HCT116 (cell line): ENCODE measurements at regions of chr6 and their contacts with region 1.

Region 1: DNA sequence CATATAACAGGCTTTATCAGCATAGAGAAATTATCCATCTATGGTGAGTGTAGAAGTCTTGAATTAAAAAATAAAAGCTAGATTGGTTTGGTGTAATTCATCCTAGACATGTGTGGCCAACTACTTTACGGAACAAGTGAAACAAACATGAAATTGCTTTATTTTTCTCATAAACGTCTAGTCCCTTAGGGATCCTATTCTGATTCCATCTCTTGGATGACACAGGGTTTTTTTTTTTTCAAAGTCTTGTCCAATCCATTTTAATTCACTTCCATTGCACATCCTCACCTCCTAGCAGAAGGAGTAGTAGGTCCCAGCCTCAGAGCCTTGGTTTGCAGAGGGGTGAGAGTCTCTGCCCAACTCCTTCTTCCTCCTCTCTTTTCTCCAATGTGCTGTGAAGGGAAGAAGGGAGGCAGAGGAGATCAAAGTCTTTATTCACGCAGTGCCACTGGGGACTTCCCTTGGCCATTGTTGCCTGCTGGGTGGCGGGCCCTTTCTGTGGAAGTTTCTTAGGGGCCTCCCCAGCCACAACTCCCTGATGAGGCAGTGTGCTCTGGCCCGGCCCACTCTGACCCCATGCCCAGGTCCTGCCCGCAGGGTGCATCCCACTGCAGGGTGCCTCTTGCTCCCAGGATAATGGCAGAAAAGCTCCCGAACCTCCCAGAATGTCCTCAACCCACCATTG is 104.4 kb upstream of the SNX9 start:
- DNase-seq: no peak
- ATAC-seq: no peak
- H3K4me3 ChIP-seq: no peak overlapping the region
- H3K27ac ChIP-seq: no peak overlapping the region
- H3K4me1 ChIP-seq: no peaks in the 10 kb centered on the region
- H3K27me3 ChIP-seq: no peaks in the 10 kb centered on the region
- CTCF ChIP-seq: no peak
- POLR2A ChIP-seq: no peak
- RAD21 ChIP-seq: no peak

Region 2: GRCh38 chr6:157674061-157674460 is 44.6 kb before region 1 on chr6:
- CTCF ChIA-PET with region 1: no interaction called
- POLR2A ChIA-PET with region 1: no interaction called
- RAD21 ChIA-PET with region 1: no interaction called
- intact Hi-C with region 1: loop called (anchors 1 kb)
- DNase-seq: no peak
- ATAC-seq: no peak
- H3K4me3 ChIP-seq: no peak overlapping the region
- H3K27ac ChIP-seq: no peak overlapping the region
- H3K4me1 ChIP-seq: no peaks in the 10 kb centered on the region
- H3K27me3 ChIP-seq: no peaks in the 10 kb centered on the region
- CTCF ChIP-seq: no peak
- POLR2A ChIP-seq: no peak
- RAD21 ChIP-seq: no peak

Region 3: GRCh38 chr6:157706883-157707282 is 11.8 kb before region 1 on chr6:
- CTCF ChIA-PET with region 1: no interaction called
- POLR2A ChIA-PET with region 1: no interaction called
- RAD21 ChIA-PET with region 1: no interaction called
- intact Hi-C with region 1: no loop called
- DNase-seq: no peak
- ATAC-seq: no peak
- H3K4me3 ChIP-seq: no peak overlapping the region
- H3K27ac ChIP-seq: no peak overlapping the region
- H3K4me1 ChIP-seq: peaks cover 0 to 5% of the 10 kb centered on the region in 2 experiments; a peak in 1 of 4 replicates
- H3K27me3 ChIP-seq: no peaks in the 10 kb centered on the region
- CTCF ChIP-seq: no peak
- POLR2A ChIP-seq: no peak
- RAD21 ChIP-seq: no peak